Mammary epithelial cell (primary cell): ENCODE measurements at regions of chr4 and their contacts with region 1.

Region 1: GRCh38 chr4:6709230-6710114 is at the start of gene MRFAP1L1:
- DNase-seq: peak; percentile 96
- H3K4me3 ChIP-seq: peak within 1 kb of the TSS; percentile 73 to 96 (median 81)
- H3K27ac ChIP-seq: peak within 1 kb of the TSS; percentile 66
- H3K4me1 ChIP-seq: peaks cover 16% of the 10 kb centered on the region
- H3K27me3 ChIP-seq: no peaks in the 10 kb centered on the region
- CTCF ChIP-seq: peak in 1 of 2 donors; percentile 15
- total RNA-seq, gene MRFAP1L1: 34.0 to 35.9 TPM

Region 2: GRCh38 chr4:6269616-6270511 is 439.6 kb before region 1 on chr4 and contains the start of gene WFS1:
- CTCF ChIA-PET with region 1: no interaction called
- dilution Hi-C with region 1: no loop called
- in situ Hi-C with region 1: no loop called
- intact Hi-C with region 1: loop called (anchors 10 kb)
- DNase-seq: peak; percentile 99
- H3K4me3 ChIP-seq: peak within 1 kb of the TSS; percentile 74 to 83 (median 77)
- H3K27ac ChIP-seq: no peak within 1 kb of the TSS
- H3K4me1 ChIP-seq: peaks cover 31% of the 10 kb centered on the region
- H3K27me3 ChIP-seq: no peaks in the 10 kb centered on the region
- CTCF ChIP-seq: no peak
- total RNA-seq, gene WFS1: 13.3 to 17.8 TPM

Region 3: GRCh38 chr4:6640292-6641163 is 68.9 kb before region 1 on chr4 and contains the start of gene MRFAP1:
- CTCF ChIA-PET with region 1: no interaction called
- dilution Hi-C with region 1: no loop called
- in situ Hi-C with region 1: no loop called
- intact Hi-C with region 1: loop called (anchors 1 kb)
- DNase-seq: peak; percentile 96
- H3K4me3 ChIP-seq: peak within 1 kb of the TSS; percentile 77 to 87 (median 85)
- H3K27ac ChIP-seq: peak within 1 kb of the TSS; percentile 89
- H3K4me1 ChIP-seq: peaks cover 12% of the 10 kb centered on the region
- H3K27me3 ChIP-seq: no peaks in the 10 kb centered on the region
- CTCF ChIP-seq: no peak
- total RNA-seq, gene MRFAP1: 71.2 to 248 TPM

Region 4: GRCh38 chr4:6673660-6674499 is 35.6 kb before region 1 on chr4:
- CTCF ChIA-PET with region 1: no interaction called
- dilution Hi-C with region 1: no loop called
- in situ Hi-C with region 1: no loop called
- intact Hi-C with region 1: loop called (anchors 1 kb)
- DNase-seq: peak; percentile 88
- H3K4me3 ChIP-seq: peak overlapping the region; percentile 62 to 72 (median 65)
- H3K27ac ChIP-seq: peak overlapping the region; percentile 31
- H3K4me1 ChIP-seq: peaks cover 26% of the 10 kb centered on the region
- H3K27me3 ChIP-seq: no peaks in the 10 kb centered on the region
- CTCF ChIP-seq: no peak

Region 5: DNA sequence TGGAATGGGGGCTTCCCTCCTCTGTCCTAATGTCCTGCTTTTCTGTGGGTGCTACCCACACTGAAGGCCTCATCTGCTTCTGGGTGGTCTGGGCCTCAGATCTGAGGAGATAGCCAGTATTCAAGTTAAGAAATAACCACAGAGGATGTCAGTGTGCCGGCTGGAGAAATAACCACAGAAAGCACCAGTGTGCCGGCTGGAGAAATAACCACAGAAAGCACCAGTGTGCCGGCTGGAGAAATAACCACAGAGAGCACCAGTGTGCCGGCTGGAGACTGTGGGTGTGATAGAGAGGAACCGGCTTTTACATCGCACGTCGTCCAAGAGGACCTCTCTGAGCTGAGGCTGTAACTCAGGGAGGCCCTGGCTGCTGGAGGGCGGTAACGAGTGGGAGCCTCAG is 790.9 kb after region 1 on chr4:
- CTCF ChIA-PET with region 1: no interaction called
- dilution Hi-C with region 1: no loop called
- in situ Hi-C with region 1: no loop called
- intact Hi-C with region 1: no loop called
- DNase-seq: no peak
- H3K4me3 ChIP-seq: no peak overlapping the region
- H3K27ac ChIP-seq: no peak overlapping the region
- H3K4me1 ChIP-seq: no peaks in the 10 kb centered on the region
- H3K27me3 ChIP-seq: no peaks in the 10 kb centered on the region
- CTCF ChIP-seq: no peak